SK-N-SH (cell line): ENCODE measurements at regions of chr1 and their contacts with region 1.

Region 1: GRCh38 chr1:209207701-209208286 is 375.7 kb upstream of the CAMK1G start:
- DNase-seq: peak; percentile 87
- H3K4me3 ChIP-seq: peak overlapping the region; percentile 38 to 49
- H3K27ac ChIP-seq: peak overlapping the region in 1 of 2 experiments; percentile 71; a peak in 2 of 4 replicates
- H3K4me1 ChIP-seq: peaks cover 0 to 23% of the 10 kb centered on the region in 2 experiments; a peak in 3 of 4 replicates
- H3K27me3 ChIP-seq: no peaks in the 10 kb centered on the region
- CTCF ChIP-seq: peak; percentile 87
- EP300 ChIP-seq: no peak
- RAD21 ChIP-seq: peak; percentile 92

Region 2: GRCh38 chr1:209190591-209191261 is 17.1 kb before region 1 on chr1:
- CTCF ChIA-PET with region 1: interaction called, 20 read pairs
- POLR2A ChIA-PET with region 1: no interaction called
- DNase-seq: peak; percentile 53
- H3K4me3 ChIP-seq: peak overlapping the region in 1 of 2 experiments; percentile 33; a peak in 1 of 4 replicates
- H3K27ac ChIP-seq: no peak overlapping the region
- H3K4me1 ChIP-seq: peaks cover 0 to 5% of the 10 kb centered on the region in 2 experiments; a peak in 2 of 4 replicates
- H3K27me3 ChIP-seq: no peaks in the 10 kb centered on the region
- CTCF ChIP-seq: peak; percentile 76
- EP300 ChIP-seq: no peak
- RAD21 ChIP-seq: peak; percentile 72

Region 3: GRCh38 chr1:209222826-209223225 is 15.0 kb after region 1 on chr1:
- CTCF ChIA-PET with region 1: interaction called, 25 read pairs
- POLR2A ChIA-PET with region 1: no interaction called
- DNase-seq: peak; percentile 87
- H3K4me3 ChIP-seq: no peak overlapping the region
- H3K27ac ChIP-seq: peak overlapping the region in 1 of 2 experiments; percentile 97; a peak in 2 of 4 replicates
- H3K4me1 ChIP-seq: peaks cover 0 to 48% of the 10 kb centered on the region in 2 experiments; a peak in 2 of 4 replicates
- H3K27me3 ChIP-seq: no peaks in the 10 kb centered on the region
- CTCF ChIP-seq: no peak
- EP300 ChIP-seq: peak in 1 of 2 experiments; percentile 95; a peak in 2 of 4 replicates
- RAD21 ChIP-seq: no peak; the same call in none of the 2 replicates

Region 4: GRCh38 chr1:209342441-209343175 is 134.8 kb after region 1 on chr1:
- CTCF ChIA-PET with region 1: interaction called, 10 read pairs
- POLR2A ChIA-PET with region 1: no interaction called
- DNase-seq: no peak
- H3K4me3 ChIP-seq: no peak overlapping the region
- H3K27ac ChIP-seq: no peak overlapping the region
- H3K4me1 ChIP-seq: peaks cover 0 to 25% of the 10 kb centered on the region in 2 experiments; a peak in 2 of 4 replicates
- H3K27me3 ChIP-seq: no peaks in the 10 kb centered on the region
- CTCF ChIP-seq: no peak
- EP300 ChIP-seq: no peak
- RAD21 ChIP-seq: no peak